Psoas muscle (tissue), 8 donors: ENCODE measurements at regions of chr10 and their contacts with region 1.

Region 1: GRCh38 chr10:44998146-44998671 is 2.5 kb upstream of the ZNF22 start:
- DNase-seq: no peak
- ATAC-seq: no peak
- H3K4me3 ChIP-seq: no peak overlapping the region
- H3K27ac ChIP-seq: no peak overlapping the region
- H3K4me1 ChIP-seq: peaks cover 46% of the 10 kb centered on the region
- H3K27me3 ChIP-seq: no peaks in the 10 kb centered on the region
- CTCF ChIP-seq: no peak

Region 2: GRCh38 chr10:44706745-44707144 is 291.5 kb before region 1 on chr10:
- intact Hi-C with region 1: no loop called
- DNase-seq: no peak
- ATAC-seq: no peak
- H3K4me3 ChIP-seq: no peak overlapping the region
- H3K27ac ChIP-seq: no peak overlapping the region
- H3K4me1 ChIP-seq: no peaks in the 10 kb centered on the region
- H3K27me3 ChIP-seq: no peaks in the 10 kb centered on the region
- CTCF ChIP-seq: no peak

Region 3: DNA sequence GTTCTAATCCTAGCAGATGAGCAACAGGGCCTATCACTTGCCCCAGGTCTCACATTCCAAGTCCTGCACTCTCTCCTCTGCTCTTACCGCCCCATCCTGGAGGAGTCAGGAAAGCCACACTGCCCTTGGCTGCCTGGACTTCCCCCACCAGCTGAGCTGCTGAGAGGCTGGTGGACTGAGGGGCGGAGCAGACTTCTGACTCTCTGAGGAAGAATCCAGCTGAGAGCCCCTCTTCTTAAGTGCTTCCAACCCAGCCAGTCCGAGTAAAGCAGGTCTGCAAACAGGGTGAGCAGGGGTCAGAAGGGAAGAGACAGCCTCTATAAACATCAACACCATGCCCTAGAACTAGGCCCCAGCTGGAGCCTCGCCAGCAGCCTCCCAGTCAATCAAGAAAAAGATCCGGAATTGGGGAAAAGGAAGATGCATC is 179.5 kb before region 1 on chr10:
- intact Hi-C with region 1: no loop called
- DNase-seq: no peak
- ATAC-seq: no peak
- H3K4me3 ChIP-seq: no peak overlapping the region
- H3K27ac ChIP-seq: peak overlapping the region; percentile 41
- H3K4me1 ChIP-seq: no peaks in the 10 kb centered on the region
- H3K27me3 ChIP-seq: no peaks in the 10 kb centered on the region
- CTCF ChIP-seq: no peak

Region 4: DNA sequence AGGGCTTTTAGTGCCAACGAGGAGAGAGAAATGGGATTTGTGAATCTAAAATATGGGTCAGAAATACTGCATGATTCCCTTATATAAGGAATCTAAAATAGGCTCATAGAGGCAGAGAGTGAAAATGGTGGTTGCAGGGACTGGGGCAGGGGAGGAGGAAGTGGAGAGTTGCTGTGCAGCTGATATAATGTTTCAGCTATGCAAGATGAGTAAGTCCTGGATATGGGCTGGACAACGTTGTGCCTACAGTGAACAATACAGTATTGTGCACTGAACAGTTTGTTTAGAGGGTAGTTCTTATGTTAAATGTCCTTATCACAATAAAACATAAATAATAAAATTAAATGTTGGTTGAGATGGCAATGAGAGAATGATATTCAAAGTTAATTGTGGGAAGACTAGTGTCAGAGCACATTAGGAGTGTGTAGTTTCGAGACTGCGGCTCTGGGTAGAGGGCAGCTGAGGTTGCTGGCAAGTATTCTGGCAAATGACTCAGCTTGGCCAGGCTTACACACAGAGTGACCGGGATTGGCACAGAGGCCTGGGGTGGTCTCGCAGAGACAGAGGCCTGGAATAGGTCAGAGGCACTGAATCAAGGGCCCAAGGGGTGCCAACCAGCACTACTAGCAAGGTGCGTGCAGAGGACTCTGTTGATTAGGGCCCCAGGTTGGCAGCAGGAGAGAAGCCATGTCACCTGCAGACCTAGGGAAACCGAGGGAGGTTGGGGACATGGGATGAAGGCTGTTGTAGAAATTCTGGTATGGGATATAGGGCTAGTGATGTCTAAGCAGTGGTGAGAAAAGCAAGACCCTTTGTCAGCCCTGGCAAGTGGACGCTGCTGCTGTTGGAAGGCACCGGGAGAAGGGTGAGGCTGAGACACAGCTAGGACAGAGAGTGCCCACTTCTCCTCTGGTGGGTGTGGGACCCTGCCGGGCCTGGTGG is 16.8 kb before region 1 on chr10:
- intact Hi-C with region 1: loop called in 1 of 2 experiments (anchors 2 kb)
- DNase-seq: peak; percentile 69 to 78
- ATAC-seq: peak; percentile 55 to 67 (median 62)
- H3K4me3 ChIP-seq: peak overlapping the region; percentile 14
- H3K27ac ChIP-seq: peak overlapping the region; percentile 96
- H3K4me1 ChIP-seq: peaks cover 59% of the 10 kb centered on the region
- H3K27me3 ChIP-seq: no peaks in the 10 kb centered on the region
- CTCF ChIP-seq: no peak